PC-9 (cell line): ENCODE measurements at regions of chr1 and their contacts with region 1.

Region 1: GRCh38 chr1:91511386-91511785 is 10.7 kb downstream of the CDC7 start:
- DNase-seq: peak in 1 of 2 experiments; percentile 50
- H3K4me3 ChIP-seq: no peak overlapping the region
- H3K27ac ChIP-seq: no peak overlapping the region
- H3K4me1 ChIP-seq: no peaks in the 10 kb centered on the region
- H3K27me3 ChIP-seq: no peaks in the 10 kb centered on the region
- CTCF ChIP-seq: peak; percentile 87

Region 2: GRCh38 chr1:89794406-89794805 is 1717.0 kb before region 1 on chr1:
- CTCF ChIA-PET with region 1: no interaction called
- POLR2A ChIA-PET with region 1: no interaction called
- intact Hi-C with region 1: no loop called
- DNase-seq: no peak
- H3K4me3 ChIP-seq: no peak overlapping the region
- H3K27ac ChIP-seq: no peak overlapping the region
- H3K4me1 ChIP-seq: no peaks in the 10 kb centered on the region
- H3K27me3 ChIP-seq: no peaks in the 10 kb centered on the region
- CTCF ChIP-seq: no peak

Region 3: GRCh38 chr1:90973897-90974798 is 537.2 kb before region 1 on chr1:
- CTCF ChIA-PET with region 1: no interaction called
- POLR2A ChIA-PET with region 1: no interaction called
- intact Hi-C with region 1: no loop called
- DNase-seq: no peak
- H3K4me3 ChIP-seq: no peak overlapping the region
- H3K27ac ChIP-seq: peak overlapping the region; percentile 11
- H3K4me1 ChIP-seq: peaks cover 9% of the 10 kb centered on the region
- H3K27me3 ChIP-seq: no peaks in the 10 kb centered on the region
- CTCF ChIP-seq: no peak

Region 4: DNA sequence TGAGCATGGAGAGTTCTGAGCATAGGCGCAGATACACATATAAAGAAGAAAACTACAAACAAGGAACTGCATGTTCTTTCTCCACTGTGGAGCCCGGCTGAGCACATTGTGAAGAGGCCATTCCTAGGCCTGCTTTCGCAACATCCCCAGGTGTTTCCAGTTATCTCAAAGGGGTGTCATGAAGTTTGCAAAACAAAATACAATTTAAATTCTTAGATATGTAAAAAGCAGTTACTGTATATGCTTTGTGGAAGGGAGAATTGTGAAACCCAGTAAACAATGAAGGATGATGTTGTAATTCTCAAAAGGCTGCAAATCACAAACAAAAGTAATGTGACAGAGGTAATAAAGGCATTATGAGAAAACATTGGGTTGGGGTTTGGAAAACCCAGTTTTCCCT is 391.0 kb before region 1 on chr1:
- CTCF ChIA-PET with region 1: no interaction called
- POLR2A ChIA-PET with region 1: no interaction called
- intact Hi-C with region 1: no loop called
- DNase-seq: peak in 1 of 2 experiments; percentile 80
- H3K4me3 ChIP-seq: no peak overlapping the region
- H3K27ac ChIP-seq: peak overlapping the region; percentile 42
- H3K4me1 ChIP-seq: peaks cover 35% of the 10 kb centered on the region
- H3K27me3 ChIP-seq: no peaks in the 10 kb centered on the region
- CTCF ChIP-seq: no peak

Region 5: DNA sequence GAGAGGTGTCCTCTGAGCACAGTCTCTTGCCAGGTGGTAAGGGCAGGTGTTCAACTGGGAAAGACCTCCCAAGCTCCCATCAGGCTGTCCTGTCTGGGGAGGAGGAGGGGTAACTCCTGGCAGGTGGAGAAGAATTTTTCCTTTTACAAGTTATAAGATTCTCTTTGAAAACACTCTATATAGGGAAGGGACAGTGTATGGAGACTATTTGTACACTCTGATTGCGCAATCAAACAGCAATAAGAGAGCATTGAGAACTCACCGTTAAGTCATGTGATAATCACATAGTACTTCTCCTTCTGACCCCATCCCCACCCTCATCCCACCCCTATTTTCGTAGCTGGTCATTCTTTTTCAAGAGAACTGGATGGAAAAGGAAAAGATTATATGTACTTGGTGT is 310.2 kb before region 1 on chr1:
- CTCF ChIA-PET with region 1: no interaction called
- POLR2A ChIA-PET with region 1: no interaction called
- intact Hi-C with region 1: no loop called
- DNase-seq: no peak
- H3K4me3 ChIP-seq: no peak overlapping the region
- H3K27ac ChIP-seq: no peak overlapping the region
- H3K4me1 ChIP-seq: no peaks in the 10 kb centered on the region
- H3K27me3 ChIP-seq: no peaks in the 10 kb centered on the region
- CTCF ChIP-seq: no peak

Region 6: DNA sequence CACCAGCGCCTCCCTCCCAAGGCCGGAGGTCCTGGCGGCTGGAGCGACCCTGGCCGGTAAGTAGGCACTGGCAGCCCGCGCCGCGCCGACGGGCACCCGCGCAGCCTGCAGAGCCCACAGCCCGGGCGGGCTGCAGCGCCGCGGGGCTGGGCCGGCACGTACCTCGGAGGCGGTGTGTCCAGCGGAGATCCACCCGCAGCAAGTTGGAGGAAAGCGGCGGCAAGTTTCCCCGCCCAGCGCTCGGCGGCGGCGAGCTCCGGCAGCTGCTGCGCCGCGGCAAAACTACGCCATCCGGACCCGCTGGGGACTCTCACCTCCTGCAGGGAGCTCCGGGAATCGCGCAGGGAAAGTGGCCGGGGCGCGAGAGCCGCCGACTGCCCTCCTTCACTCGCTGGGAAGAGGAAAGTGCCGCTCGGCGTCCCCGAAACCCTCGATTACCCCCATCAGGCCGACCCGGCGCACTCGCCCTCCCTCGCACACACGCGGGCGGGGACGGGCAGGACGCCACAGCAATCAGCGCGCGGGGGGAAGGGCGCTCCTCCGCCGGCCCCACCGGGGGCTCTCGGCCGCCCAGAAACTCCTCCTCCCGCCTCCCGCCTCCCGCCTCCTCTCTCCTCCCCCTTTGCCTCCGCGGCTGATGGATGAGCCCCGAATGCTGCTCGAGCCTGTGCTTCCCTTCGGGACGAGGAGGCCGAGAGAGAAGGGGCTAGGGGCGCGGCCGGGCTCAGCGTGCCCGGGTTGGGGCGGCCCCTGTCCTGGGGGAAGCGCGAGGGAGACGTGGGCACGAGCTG is 374.5 kb after region 1 on chr1 and contains the start of gene TGFBR3:
- CTCF ChIA-PET with region 1: interaction called, 4 read pairs
- POLR2A ChIA-PET with region 1: no interaction called
- intact Hi-C with region 1: loop called (anchors 5 kb)
- DNase-seq: peak; percentile 77 to 80
- H3K4me3 ChIP-seq: peak within 1 kb of the TSS; percentile 87
- H3K27ac ChIP-seq: peak within 1 kb of the TSS; percentile 30; the same call in 1 of the 2 replicates
- H3K4me1 ChIP-seq: peaks cover 42% of the 10 kb centered on the region
- H3K27me3 ChIP-seq: no peaks in the 10 kb centered on the region
- CTCF ChIP-seq: peak; percentile 60
- total RNA-seq, gene TGFBR3: 1.6 and 2.5 TPM in 2 replicates

Region 7: DNA sequence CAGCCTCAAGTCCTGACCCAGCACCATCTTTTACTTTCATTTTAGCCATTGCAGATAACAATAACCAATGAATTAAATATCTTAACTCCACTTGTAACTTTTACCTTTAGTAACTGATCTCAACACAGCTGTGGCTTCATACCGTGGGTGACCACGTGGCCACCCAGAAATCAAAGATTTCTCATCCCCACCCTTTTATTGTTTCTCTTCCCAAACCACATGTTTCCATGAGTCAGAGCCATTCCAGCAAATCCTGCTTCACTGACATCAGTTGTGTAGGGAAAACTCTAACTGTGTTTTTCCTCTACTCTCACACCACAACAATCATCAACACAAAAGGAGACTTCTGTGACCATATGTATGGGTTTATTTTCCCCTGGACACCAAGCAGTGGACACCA is 412.8 kb after region 1 on chr1:
- CTCF ChIA-PET with region 1: no interaction called
- POLR2A ChIA-PET with region 1: no interaction called
- intact Hi-C with region 1: loop called (anchors 1 kb)
- DNase-seq: no peak
- H3K4me3 ChIP-seq: no peak overlapping the region
- H3K27ac ChIP-seq: no peak overlapping the region
- H3K4me1 ChIP-seq: peaks cover 13% of the 10 kb centered on the region
- H3K27me3 ChIP-seq: no peaks in the 10 kb centered on the region
- CTCF ChIP-seq: no peak

Region 8: DNA sequence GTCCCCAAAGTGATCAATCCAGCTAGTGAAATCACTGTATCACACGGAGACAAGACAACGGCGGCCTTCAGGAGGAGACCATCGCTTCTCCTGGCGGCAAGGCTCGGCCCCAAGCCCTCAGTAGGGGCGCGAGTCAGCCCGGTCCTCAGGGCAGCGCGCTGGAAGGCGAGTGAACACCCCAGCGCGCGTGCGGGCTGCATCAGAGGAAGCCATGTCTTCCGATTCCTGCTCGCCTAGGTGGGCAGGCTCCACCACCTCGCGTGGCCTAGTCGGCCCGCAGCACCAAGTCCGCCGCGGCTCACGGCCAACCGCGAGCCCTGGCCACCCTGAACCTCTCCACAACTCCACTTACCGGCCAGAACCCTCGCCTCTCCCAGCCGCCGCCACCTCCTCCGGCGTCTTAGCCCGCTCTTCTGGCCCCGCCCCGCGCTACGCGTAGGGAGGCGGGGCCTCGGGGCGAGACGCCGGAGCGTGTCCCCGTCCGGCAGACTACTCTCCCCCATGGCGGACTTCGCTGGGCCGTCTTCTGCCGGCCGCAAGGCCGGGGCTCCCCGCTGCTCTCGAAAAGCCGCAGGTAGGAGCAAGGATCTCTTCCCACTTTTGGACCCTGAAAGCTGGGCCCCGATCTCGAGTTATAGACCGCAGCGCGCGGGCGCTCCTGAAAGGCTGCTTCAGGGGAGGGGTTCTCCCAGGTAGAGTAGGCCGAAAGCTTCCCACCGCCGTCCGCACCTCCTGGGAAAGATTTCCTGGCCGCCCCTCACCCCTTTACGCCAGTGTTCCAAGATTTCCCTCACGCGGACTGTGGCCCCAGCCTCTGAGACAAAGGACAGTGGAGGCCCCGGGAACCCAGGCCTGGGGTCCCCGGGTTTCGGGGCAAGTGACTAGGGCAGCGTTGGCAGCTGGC is 787.4 kb after region 1 on chr1 and contains the starts of genes GLMN and RPAP2:
- CTCF ChIA-PET with region 1: no interaction called
- POLR2A ChIA-PET with region 1: no interaction called
- intact Hi-C with region 1: loop called (anchors 5 kb)
- DNase-seq: peak; percentile 73 to 78
- H3K4me3 ChIP-seq: peak within 1 kb of the TSS; percentile 86
- H3K27ac ChIP-seq: peak within 1 kb of the TSS; percentile 66
- H3K4me1 ChIP-seq: peaks cover 24% of the 10 kb centered on the region
- H3K27me3 ChIP-seq: no peaks in the 10 kb centered on the region
- CTCF ChIP-seq: no peak; the same call in none of the 2 replicates
- total RNA-seq, gene GLMN: 7.4 and 8.0 TPM in 2 replicates
- total RNA-seq, gene RPAP2: 14.0 and 20.3 TPM in 2 replicates